ENCODE measurements at regions of chr1 and their contacts with region 1.

Region 1: GRCh38 chr1:185864889-185865288 is 130.7 kb downstream of the HMCN1 start:
- DNase-seq: no peak
- ATAC-seq: no peak
- H3K4me3 ChIP-seq: no peak overlapping the region
- H3K27ac ChIP-seq: no peak overlapping the region
- H3K4me1 ChIP-seq: no peaks in the 10 kb centered on the region
- H3K27me3 ChIP-seq: no peaks in the 10 kb centered on the region
- CTCF ChIP-seq: no peak

Region 2: GRCh38 chr1:185804206-185804605 is 60.7 kb before region 1 on chr1:
- intact Hi-C with region 1: loop called in 1 of 2 experiments (anchors 10 kb)
- DNase-seq: no peak
- ATAC-seq: no peak
- H3K4me3 ChIP-seq: no peak overlapping the region
- H3K27ac ChIP-seq: no peak overlapping the region
- H3K4me1 ChIP-seq: no peaks in the 10 kb centered on the region
- H3K27me3 ChIP-seq: no peaks in the 10 kb centered on the region
- CTCF ChIP-seq: no peak

Region 3: DNA sequence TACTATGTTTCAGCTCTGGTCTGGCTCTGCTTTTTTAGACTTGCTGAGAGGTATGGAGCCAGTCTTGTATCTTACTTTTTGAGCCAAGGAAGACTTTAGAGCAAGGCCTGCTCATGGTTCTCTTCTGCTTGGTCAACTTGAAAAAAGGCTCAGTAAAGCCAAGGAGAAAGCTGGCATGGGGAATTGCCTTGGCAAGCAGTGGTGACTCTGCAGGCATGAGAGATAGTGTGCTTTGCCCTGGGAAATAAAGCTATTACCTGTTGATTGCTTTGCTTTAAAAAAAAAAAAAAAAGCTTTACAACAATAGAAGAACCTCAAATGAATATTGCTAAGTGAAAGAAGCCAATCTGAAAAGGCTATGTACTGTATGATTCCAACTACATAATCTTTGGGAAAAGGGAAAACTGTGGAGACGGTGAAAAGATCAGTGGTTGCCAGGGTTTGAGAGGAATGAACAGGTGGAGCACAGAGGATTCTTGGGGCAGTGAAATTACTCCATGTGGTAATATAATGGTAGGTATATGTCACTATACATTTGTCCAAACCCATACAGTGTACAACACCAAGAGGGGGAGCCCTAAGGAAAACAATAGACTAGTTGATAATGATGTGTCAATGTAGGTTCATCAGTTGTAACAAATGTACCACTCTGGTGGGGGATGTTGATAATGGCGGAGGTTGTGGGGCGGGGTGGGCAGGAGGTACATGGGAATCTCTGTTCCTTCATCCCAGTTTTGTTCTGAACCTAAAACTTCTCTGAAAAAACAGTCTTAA is 43.1 kb before region 1 on chr1:
- intact Hi-C with region 1: loop called in 1 of 2 experiments (anchors 2 kb)
- DNase-seq: no peak
- ATAC-seq: no peak
- H3K4me3 ChIP-seq: no peak overlapping the region
- H3K27ac ChIP-seq: no peak overlapping the region
- H3K4me1 ChIP-seq: no peaks in the 10 kb centered on the region
- H3K27me3 ChIP-seq: no peaks in the 10 kb centered on the region
- CTCF ChIP-seq: no peak

Measured in psoas muscle (tissue), 8 donors.